CD14-positive monocyte (primary cell): ENCODE measurements at regions of chr2 and their contacts with region 1.

Region 1: GRCh38 chr2:113138428-113139322 is 11.3 kb downstream of the IL1RN start:
- DNase-seq: peak; percentile 67 to 78 (median 74)
- H3K4me3 ChIP-seq: no peak overlapping the region
- H3K4me3 Mint-ChIP-seq: peak overlapping the region; percentile 23 to 45
- H3K27ac ChIP-seq: no peak overlapping the region
- H3K27ac Mint-ChIP-seq: peak overlapping the region in 4 of 7 donors; percentile 28 to 50 (median 42)
- H3K4me1 ChIP-seq: peaks cover 3 to 7% of the 10 kb centered on the region in 2 donors
- H3K4me1 Mint-ChIP-seq: peaks cover 27% of the 10 kb centered on the region
- H3K27me3 ChIP-seq: no peaks in the 10 kb centered on the region
- H3K27me3 Mint-ChIP-seq: peaks cover 0 to 4% (median 3%) of the 10 kb centered on the region in 3 donors
- CTCF ChIP-seq: peak; percentile 85

Region 2: DNA sequence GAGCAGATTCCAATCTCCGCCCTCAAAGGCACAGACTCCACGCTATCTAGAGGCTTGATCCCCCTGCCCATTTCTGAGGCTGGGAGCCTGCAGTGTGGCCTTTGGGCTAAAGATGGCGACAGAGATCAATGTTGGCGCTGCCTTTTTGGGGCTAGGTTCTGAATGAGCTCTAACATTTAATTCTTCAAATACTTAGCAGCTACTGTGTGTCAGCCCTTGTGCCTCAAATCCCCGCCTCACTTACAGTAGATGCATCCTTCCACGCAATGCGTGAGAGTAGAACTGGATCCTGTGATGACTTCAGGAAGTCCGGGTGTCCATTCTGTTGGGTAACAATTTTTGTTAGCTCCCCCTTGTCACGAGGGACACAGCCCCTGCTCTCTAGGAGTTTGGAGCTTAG is 58.5 kb before region 1 on chr2:
- intact Hi-C with region 1: no loop called
- DNase-seq: peak; percentile 40 to 86 (median 50)
- H3K4me3 ChIP-seq: no peak overlapping the region
- H3K4me3 Mint-ChIP-seq: no peak overlapping the region
- H3K27ac ChIP-seq: no peak overlapping the region
- H3K27ac Mint-ChIP-seq: no peak overlapping the region
- H3K4me1 ChIP-seq: peaks cover 12% of the 10 kb centered on the region in 2 donors
- H3K4me1 Mint-ChIP-seq: peaks cover 34% of the 10 kb centered on the region
- H3K27me3 ChIP-seq: no peaks in the 10 kb centered on the region
- H3K27me3 Mint-ChIP-seq: peaks cover 0 to 5% (median 2%) of the 10 kb centered on the region in 3 donors
- CTCF ChIP-seq: peak; percentile 89

Region 3: DNA sequence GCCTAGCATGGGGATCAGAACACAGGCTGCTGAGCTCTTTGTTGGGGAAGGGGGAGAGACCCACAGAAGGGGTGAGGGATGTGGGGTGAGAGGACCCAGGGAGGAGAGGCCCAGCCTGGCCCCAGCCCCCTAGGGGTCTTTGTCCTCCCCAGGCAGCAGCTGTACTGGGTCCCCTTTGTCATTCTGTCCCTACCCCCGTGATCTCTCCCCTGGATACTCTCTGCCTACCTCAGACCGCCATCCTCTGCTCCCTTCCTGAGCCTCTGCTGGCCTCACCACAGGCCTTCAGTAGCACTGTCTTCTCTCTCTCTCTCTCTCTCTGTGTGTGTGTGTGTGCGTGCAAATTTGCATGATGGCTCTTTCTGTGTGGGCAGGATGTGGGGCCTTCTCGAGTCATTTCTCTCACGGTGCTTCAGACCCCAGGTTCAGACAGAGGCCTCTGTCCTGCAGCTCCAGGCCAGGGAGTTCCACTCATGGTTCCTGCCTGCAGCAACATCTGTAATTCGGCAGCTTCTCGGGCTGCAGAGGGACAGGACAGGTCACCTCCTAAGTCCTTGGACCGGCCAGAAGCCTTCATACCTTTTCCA is 36.5 kb after region 1 on chr2:
- intact Hi-C with region 1: loop called in 1 of 2 experiments (anchors 5 kb)
- DNase-seq: no peak
- H3K4me3 ChIP-seq: peak overlapping the region; percentile 56 to 95 (median 77)
- H3K4me3 Mint-ChIP-seq: peak overlapping the region; percentile 89 to 94
- H3K27ac ChIP-seq: peak overlapping the region; percentile 96 to 97
- H3K27ac Mint-ChIP-seq: peak overlapping the region; percentile 93 to 98 (median 97)
- H3K4me1 ChIP-seq: peaks cover 64 to 79% of the 10 kb centered on the region in 2 donors
- H3K4me1 Mint-ChIP-seq: peaks cover 73% of the 10 kb centered on the region
- H3K27me3 ChIP-seq: no peaks in the 10 kb centered on the region
- H3K27me3 Mint-ChIP-seq: no peaks in the 10 kb centered on the region
- CTCF ChIP-seq: no peak

Region 4: DNA sequence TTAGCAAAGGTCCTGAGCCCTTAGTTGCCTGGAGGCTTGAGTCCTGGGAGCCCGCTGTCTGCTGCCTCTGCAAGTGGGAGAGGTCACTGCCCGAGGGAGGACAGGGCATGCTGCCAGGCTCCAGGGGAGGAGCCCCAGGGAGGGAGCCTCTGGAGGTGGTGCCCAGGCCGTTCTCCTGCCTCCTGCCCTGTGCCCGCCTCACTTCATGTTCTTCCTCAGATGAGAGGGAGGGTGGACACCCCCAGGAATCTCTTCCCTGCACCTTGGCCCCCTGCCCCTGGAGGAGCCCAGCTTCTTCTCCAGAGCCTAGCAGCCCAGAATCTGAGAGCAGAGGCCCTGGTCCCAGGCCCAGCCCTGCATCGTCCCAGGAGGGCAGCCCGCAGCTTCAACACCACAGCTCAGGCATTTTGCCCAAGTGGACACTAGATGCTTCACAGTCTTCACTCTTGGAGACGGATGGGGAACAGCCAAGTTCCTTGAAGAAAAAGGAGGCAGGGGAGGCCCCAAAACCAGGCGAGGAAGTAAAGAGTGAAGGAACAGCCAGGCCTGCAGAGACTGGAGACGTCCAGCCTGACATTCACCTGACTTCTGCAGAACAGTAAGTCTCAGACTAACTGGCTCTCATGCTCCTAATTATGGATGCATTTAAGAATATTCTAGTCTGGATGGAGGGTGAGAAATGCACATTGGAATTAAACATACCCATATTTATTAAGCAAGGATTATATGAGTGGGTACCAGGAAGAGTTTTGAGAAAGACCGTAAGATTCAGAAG is 47.2 kb after region 1 on chr2:
- intact Hi-C with region 1: loop called in 1 of 2 experiments (anchors 5 kb)
- DNase-seq: no peak
- H3K4me3 ChIP-seq: no peak overlapping the region
- H3K4me3 Mint-ChIP-seq: no peak overlapping the region
- H3K27ac ChIP-seq: peak overlapping the region; percentile 86 to 90
- H3K27ac Mint-ChIP-seq: peak overlapping the region; percentile 10 to 98 (median 95)
- H3K4me1 ChIP-seq: peaks cover 74 to 84% of the 10 kb centered on the region in 2 donors
- H3K4me1 Mint-ChIP-seq: peaks cover 82% of the 10 kb centered on the region
- H3K27me3 ChIP-seq: no peaks in the 10 kb centered on the region
- H3K27me3 Mint-ChIP-seq: peaks cover 0 to 1% (median 0%) of the 10 kb centered on the region in 3 donors
- CTCF ChIP-seq: no peak

Region 5: DNA sequence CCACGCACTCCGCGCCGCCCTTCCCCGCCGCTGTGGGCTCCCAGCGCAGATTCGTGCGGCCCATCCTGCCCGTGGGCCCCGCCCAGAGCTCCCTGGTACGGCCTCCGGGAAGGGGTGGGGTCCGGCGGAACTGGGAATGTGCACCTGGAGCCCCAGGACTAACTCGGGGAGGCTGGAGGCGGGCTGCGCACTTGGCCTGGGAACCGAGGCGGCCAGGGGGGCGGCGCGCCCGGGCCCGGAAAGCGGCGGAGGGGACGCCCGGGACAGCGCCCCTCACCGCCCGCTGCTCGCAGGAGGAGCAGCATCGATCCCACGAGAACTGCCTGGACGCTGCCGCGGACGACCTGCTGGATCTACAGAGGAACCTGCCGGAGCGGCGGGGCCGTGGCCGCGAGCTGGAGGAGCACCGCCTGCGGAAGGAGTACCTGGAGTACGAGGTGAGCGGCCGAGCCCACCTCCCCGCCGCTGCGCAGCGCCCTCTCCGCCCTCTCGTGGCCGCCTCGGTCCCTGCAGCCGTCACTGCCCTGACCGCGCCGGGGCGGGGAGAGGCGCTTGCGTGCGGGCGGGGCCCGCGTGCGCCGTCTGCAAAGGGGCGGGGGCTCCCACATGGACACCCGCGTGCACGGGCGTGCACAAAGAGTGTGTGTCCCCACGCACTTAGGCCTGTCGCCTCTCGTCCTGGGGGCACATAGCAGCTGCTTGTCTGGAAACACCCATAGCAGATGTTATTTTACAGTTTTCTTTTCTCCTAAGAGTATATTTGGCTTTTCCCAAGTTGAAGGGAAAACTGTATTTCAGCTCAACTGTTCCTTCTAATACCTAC is 60.3 kb after region 1 on chr2:
- intact Hi-C with region 1: loop called in 1 of 2 experiments (anchors 2 kb)
- DNase-seq: peak; percentile 64 to 76 (median 64)
- H3K4me3 ChIP-seq: peak overlapping the region; percentile 32 to 76 (median 38)
- H3K4me3 Mint-ChIP-seq: peak overlapping the region; percentile 75 to 84
- H3K27ac ChIP-seq: peak overlapping the region in 1 of 2 donors; percentile 65
- H3K27ac Mint-ChIP-seq: peak overlapping the region in 1 of 7 donors; percentile 73
- H3K4me1 ChIP-seq: peaks cover 8 to 12% of the 10 kb centered on the region in 2 donors
- H3K4me1 Mint-ChIP-seq: peaks cover 6% of the 10 kb centered on the region
- H3K27me3 ChIP-seq: no peaks in the 10 kb centered on the region
- H3K27me3 Mint-ChIP-seq: peaks cover 0 to 1% (median 0%) of the 10 kb centered on the region in 3 donors
- CTCF ChIP-seq: peak; percentile 98

Region 6: GRCh38 chr2:113370478-113371091 is 231.9 kb after region 1 on chr2:
- intact Hi-C with region 1: loop called in 1 of 2 experiments (anchors 5 kb)
- DNase-seq: peak; percentile 52 to 76 (median 74)
- H3K4me3 ChIP-seq: no peak overlapping the region
- H3K4me3 Mint-ChIP-seq: no peak overlapping the region
- H3K27ac ChIP-seq: no peak overlapping the region
- H3K27ac Mint-ChIP-seq: peak overlapping the region in 3 of 7 donors; percentile 68 to 77 (median 71)
- H3K4me1 ChIP-seq: peaks cover 46 to 47% of the 10 kb centered on the region in 2 donors
- H3K4me1 Mint-ChIP-seq: peaks cover 57% of the 10 kb centered on the region
- H3K27me3 ChIP-seq: no peaks in the 10 kb centered on the region
- H3K27me3 Mint-ChIP-seq: peaks cover 0 to 4% (median 0%) of the 10 kb centered on the region in 3 donors
- CTCF ChIP-seq: peak; percentile 74